PC-9 (cell line): ENCODE measurements at regions of chr2 and their contacts with region 1.

Region 1: GRCh38 chr2:168246483-168247340 is 683 bp downstream of the STK39 start:
- DNase-seq: peak; percentile 37 to 58
- H3K4me3 ChIP-seq: peak overlapping the region; percentile 90
- H3K27ac ChIP-seq: peak overlapping the region; percentile 70
- H3K4me1 ChIP-seq: peaks cover 41% of the 10 kb centered on the region
- H3K27me3 ChIP-seq: no peaks in the 10 kb centered on the region
- CTCF ChIP-seq: peak; percentile 43; the same call in 1 of the 2 replicates

Region 2: DNA sequence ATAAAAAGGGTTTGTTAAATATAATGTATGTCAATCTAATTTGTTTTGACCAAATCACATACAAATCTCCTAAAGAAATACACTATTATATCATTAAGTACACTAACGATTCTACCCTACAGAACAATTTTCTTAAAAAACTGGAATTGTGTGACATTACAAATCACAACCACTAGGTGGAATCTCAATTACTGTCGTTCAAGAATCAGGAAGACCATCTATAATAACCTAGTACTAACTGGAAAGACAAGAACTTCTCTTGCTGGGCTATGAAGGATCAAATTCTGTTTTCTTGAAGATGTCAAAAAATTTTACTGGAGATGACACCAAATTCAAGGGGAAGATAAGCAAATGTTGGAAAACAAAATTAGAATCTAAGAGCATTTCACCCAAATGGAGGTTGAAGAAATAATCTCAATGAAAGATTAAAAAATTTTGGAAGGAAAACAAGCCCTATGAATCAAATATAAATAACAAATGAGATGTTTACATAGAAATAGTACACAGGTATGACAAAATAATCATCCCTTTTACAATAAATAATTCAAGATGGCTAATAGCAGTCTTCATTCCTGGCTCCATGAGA is 110.2 kb before region 1 on chr2:
- CTCF ChIA-PET with region 1: no interaction called
- POLR2A ChIA-PET with region 1: no interaction called
- intact Hi-C with region 1: loop called (anchors 5 kb)
- DNase-seq: no peak
- H3K4me3 ChIP-seq: no peak overlapping the region
- H3K27ac ChIP-seq: 0 out of 2 replicates have a peak overlapping the region, but pooled peaks have one; percentile 34
- H3K4me1 ChIP-seq: peaks cover 21% of the 10 kb centered on the region
- H3K27me3 ChIP-seq: no peaks in the 10 kb centered on the region
- CTCF ChIP-seq: peak; percentile 61

Region 3: GRCh38 chr2:168210895-168211570 is 35.7 kb before region 1 on chr2:
- CTCF ChIA-PET with region 1: no interaction called
- POLR2A ChIA-PET with region 1: no interaction called
- intact Hi-C with region 1: loop called (anchors 5 kb)
- DNase-seq: peak; percentile 23 to 98
- H3K4me3 ChIP-seq: peak overlapping the region; percentile 27; the same call in 1 of the 2 replicates
- H3K27ac ChIP-seq: peak overlapping the region; percentile 99
- H3K4me1 ChIP-seq: peaks cover 54% of the 10 kb centered on the region
- H3K27me3 ChIP-seq: no peaks in the 10 kb centered on the region
- CTCF ChIP-seq: no peak

Region 4: GRCh38 chr2:168224346-168224745 is 22.4 kb before region 1 on chr2:
- CTCF ChIA-PET with region 1: no interaction called
- POLR2A ChIA-PET with region 1: no interaction called
- intact Hi-C with region 1: loop called (anchors 2 kb)
- DNase-seq: no peak
- H3K4me3 ChIP-seq: no peak overlapping the region
- H3K27ac ChIP-seq: peak overlapping the region; percentile 12; the same call in 1 of the 2 replicates
- H3K4me1 ChIP-seq: no peaks in the 10 kb centered on the region
- H3K27me3 ChIP-seq: no peaks in the 10 kb centered on the region
- CTCF ChIP-seq: no peak